ENCODE measurements at regions of chr9 and their contacts with region 1.

Region 1: GRCh38 chr9:111986035-111986556 is 89.5 kb downstream of the UGCG start:
- DNase-seq: no peak
- H3K4me3 ChIP-seq: no peak overlapping the region
- H3K27ac ChIP-seq: peak overlapping the region; percentile 31
- H3K27me3 ChIP-seq: no peaks in the 10 kb centered on the region
- CTCF ChIP-seq: no peak

Region 2: DNA sequence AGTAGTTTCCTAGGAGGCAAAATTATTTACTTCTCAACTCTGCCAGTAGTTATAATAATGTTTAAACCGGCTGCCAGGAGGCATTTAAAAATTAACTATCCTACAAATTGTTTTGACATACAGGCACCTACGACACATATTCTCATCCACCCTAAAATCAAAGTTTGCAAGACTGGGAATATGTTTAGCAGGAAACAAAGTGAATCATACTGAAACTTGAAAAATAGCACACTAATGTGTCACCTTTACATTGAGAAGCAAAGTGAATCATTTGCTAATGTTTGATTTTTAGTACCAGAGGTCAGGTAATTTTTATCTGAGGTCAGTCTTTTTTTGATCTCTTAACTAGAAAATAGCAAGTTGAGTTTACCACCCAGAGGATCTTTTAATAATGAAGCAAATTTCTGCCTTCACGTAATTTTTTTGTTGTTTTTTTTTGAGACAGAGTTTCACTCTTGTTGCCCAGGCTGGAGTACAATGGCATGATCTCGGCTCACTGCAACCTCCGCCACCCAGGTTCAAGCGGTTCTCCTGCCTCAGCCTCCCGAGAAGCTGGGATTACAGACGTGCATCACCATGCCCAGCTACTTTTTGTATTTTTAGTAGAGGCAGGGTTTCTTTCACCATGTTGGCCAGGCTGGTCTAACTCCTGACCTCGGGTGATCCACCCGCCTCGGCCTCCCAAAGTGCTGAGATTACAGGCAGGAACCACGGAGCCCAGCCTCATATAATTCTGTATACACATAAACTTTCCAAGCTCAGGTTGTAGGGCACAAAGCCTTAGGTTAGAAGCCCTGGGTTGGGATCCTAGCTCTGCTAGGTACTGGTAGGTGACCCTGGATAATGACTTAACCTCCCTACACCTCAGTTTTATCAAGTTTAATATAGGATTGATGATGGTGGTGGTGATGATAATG is 34.8 kb after region 1 on chr9:
- CTCF ChIA-PET with region 1: interaction called, 10 read pairs
- POLR2A ChIA-PET with region 1: no interaction called
- DNase-seq: no peak
- H3K4me3 ChIP-seq: no peak overlapping the region
- H3K27ac ChIP-seq: no peak overlapping the region
- H3K27me3 ChIP-seq: no peaks in the 10 kb centered on the region
- CTCF ChIP-seq: no peak

Region 3: GRCh38 chr9:112546149-112547012 is 560.3 kb after region 1 on chr9:
- CTCF ChIA-PET with region 1: no interaction called
- POLR2A ChIA-PET with region 1: no interaction called
- DNase-seq: no peak
- H3K4me3 ChIP-seq: no peak overlapping the region
- H3K27ac ChIP-seq: no peak overlapping the region
- H3K27me3 ChIP-seq: no peaks in the 10 kb centered on the region
- CTCF ChIP-seq: no peak

Measured in AG04450 (cell line).